ENCODE measurements at regions of chr3 and their contacts with region 1.

Region 1: GRCh38 chr3:64224826-64225610 is at the start of gene PRICKLE2:
- DNase-seq: peak; percentile 66 to 97 (median 79)

Region 2: DNA sequence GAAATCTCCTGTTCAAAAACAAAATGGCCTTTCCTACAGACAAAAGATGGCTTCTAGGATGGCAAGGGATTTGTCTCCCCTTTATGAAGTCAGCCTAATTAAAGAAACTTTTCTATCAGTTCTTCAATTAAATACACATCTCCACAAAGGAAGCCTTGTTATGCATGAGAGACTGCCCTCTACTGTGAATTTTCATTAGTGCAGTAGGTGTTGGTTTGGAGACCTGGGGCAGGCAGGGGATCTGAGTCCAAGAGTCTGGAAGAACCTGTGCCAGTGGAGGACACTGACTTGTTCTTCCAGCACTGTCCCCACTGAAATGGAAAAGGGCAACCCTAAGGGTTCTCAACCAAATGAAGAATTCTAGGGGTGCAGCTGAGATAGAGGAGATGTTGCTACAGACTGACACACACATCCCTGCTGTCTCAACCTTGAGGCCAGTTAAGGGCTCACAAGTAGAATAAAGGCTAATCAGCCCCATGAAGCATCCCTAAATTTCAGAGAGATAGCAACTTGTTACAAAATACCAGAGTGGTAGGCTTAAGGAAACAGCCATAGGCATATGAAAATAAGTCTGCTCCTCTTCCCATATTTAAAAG is 174.3 kb after region 1 on chr3:
- intact Hi-C with region 1: loop called (anchors 5 kb)
- DNase-seq: peak in 2 of 10 donors; percentile 21 to 27

Measured in posterior cingulate gyrus (tissue), 11 donors.